ENCODE measurements at regions of chr13 and their contacts with region 1.

Region 1: GRCh38 chr13:97018029-97018831 is 24.0 kb upstream of the OXGR1 start:
- DNase-seq: no peak
- H3K4me3 ChIP-seq: no peak overlapping the region
- H3K27ac ChIP-seq: no peak overlapping the region
- H3K4me1 ChIP-seq: no peaks in the 10 kb centered on the region
- H3K27me3 ChIP-seq: no peaks in the 10 kb centered on the region
- CTCF ChIP-seq: peak in 3 of 4 experiments; percentile 60 to 67 (median 65)
- POLR2A ChIP-seq: no peak

Region 2: DNA sequence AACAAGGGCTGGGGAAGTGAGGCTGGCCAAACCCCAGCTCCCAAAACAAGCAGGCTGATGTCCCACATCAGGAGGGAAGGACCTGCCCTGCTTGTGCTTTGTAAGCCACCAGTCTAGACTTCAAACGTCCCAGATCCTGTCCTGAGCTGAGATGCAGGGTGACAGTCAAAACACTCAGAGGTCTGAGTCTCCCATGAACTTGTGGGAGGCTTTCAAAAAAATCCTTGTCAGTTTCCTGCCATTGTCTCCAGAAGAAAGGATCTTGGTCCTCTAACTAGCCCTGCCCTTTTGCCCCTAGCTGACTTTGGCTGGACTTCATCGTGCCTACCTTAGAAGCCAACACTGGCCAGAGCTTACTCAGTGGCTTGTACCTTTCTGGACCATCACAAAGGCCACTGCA is 1417.0 kb before region 1 on chr13:
- intact Hi-C with region 1: no loop called
- DNase-seq: no peak
- H3K4me3 ChIP-seq: no peak overlapping the region
- H3K27ac ChIP-seq: no peak overlapping the region
- H3K4me1 ChIP-seq: peaks cover 7% of the 10 kb centered on the region
- H3K27me3 ChIP-seq: no peaks in the 10 kb centered on the region
- CTCF ChIP-seq: no peak
- POLR2A ChIP-seq: no peak

Region 3: DNA sequence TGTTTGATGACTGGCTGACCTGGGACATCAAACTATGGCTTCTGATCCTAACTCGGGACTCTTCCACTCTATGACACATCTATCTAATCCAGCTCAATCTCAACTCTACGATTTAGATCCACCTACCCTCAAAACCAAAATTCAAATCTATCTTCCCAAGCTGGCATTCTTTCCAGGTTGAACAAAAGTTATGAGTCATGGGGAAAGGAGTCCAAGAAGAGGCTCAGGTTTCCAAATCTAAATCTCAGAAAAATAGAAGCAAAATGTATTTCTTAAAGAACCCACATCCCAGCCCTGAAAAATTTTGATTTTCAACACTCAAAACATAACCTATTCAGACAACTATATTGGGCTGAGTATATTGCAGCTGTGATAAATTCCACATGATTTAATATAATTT is 791.3 kb after region 1 on chr13:
- intact Hi-C with region 1: loop called (anchors 10 kb)
- DNase-seq: no peak
- H3K4me3 ChIP-seq: no peak overlapping the region
- H3K27ac ChIP-seq: no peak overlapping the region
- H3K4me1 ChIP-seq: no peaks in the 10 kb centered on the region
- H3K27me3 ChIP-seq: no peaks in the 10 kb centered on the region
- CTCF ChIP-seq: no peak
- POLR2A ChIP-seq: no peak

Measured in prostate gland (tissue), 2 donors.